ENCODE measurements at regions of chr16 and their contacts with region 1.

Region 1: DNA sequence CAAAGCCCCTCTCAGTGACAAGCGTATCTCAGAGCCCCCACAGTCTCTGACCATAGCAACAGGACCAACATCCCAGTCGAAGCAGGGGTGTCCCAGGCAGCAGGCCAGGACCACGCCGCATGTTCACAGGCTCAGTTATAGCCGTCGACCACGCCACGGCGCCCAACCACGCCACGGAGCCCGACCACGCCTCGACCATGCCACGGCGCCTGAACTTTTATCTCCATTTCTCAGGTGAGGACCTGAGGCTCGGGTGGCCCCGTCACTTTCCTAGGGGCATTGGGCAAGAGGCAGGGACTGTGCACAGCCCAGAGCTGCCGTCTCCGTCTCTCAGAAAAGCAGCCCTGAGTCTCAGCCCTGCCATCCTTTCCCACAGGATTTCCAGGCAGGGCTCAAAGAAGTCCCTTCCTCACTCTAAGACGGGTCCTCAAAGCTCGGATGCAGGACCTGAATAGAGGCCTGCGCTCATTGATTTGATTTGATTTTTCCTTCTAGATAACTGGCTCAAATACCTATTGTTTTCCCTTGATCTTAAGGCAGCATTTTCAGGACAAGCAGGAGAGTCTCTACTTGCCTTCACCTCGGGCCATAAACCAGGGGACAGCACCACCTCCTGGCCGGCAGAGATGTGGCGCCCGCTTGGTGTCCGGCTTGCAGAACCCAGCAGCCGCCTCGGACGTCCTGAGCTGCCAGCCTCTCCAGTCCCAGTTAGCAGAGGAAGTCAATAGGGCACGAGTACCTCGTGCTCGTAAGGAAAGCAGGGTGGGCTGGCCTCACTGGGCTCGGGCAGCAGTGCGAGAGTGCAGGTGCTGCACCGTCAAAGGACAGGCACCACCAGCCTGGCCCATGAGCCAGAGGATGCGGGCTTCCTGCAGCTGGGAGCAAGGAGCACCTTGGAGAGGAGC is 38.7 kb downstream of the C16orf95 start:
- DNase-seq: peak; percentile 49
- H3K4me3 Mint-ChIP-seq: no peak overlapping the region
- H3K27ac Mint-ChIP-seq: no peak overlapping the region
- H3K4me1 Mint-ChIP-seq: peaks cover 15% of the 10 kb centered on the region
- H3K27me3 Mint-ChIP-seq: no peaks in the 10 kb centered on the region

Region 2: DNA sequence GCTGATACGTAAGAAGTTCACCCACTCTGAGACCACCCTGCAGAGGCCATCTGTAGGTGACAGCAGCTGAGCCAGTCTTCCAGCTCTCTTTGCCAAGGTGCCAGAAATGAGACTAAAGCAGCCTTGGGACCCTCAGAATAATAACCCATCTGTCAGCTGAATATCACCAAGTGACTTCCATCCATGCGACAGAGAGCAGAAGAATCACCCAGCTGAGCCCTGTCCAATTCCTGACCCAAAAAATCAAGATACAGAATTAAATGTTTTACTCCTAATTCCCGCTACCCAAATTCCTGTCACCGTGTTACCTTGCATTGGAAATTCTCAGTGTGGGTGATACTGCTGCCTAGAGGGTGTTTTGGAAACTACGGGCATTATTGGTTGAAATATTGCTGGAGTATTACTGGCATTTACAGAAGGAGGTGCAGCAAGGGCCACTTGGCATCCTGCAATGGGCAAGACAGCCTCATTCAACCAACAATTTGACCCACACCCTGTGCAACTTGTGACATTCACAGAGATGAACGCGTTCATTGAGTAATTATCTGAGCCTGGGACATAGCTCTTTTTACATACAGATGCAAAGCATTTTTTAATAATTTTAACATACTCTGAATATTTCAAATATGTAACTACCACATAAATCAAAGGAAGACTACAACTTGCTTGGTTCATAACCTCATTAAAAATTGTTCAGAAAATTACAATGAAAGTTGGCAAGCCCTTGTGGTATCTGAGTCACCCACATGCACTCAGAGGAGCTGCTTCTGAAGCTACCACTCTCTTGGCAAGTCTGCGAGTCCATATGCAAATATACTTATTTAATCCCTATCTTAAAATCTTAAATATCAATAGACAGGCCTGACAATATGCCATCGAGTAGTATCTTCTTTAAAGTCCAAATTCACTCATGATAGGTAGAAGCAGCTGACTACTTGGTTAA is 87.9 kb before region 1 on chr16:
- intact Hi-C with region 1: no loop called
- DNase-seq: no peak
- H3K4me3 Mint-ChIP-seq: no peak overlapping the region
- H3K27ac Mint-ChIP-seq: no peak overlapping the region
- H3K4me1 Mint-ChIP-seq: no peaks in the 10 kb centered on the region
- H3K27me3 Mint-ChIP-seq: no peaks in the 10 kb centered on the region

Region 3: DNA sequence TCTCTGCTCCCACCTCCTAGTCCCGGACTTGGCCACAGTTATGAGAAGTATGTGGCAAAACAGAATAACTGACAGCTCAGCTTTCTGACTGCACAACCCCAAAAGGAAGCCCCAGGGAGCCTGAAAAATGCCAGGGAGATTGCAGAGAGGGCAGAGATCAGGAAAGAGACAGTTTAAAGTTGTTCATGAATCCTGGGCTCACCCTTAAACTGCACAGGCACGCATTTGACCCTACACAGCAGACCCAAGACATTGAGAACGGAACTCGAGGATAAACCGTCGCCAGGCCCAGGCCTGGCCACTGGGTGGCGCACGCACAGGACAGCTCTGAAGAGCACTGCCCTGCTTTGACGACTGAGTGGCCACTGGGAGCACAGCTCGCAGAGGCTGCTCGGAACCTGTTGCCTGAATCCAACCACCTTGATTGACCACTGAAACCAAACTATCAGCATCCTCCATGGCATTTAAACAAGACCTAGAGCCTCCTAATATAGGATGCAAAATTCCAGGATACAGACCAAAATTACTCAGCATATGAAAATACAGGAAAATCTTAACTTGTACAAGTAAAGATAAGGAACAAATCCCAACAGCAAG is 75.3 kb before region 1 on chr16:
- intact Hi-C with region 1: loop called (anchors 1 kb)
- DNase-seq: peak; percentile 47
- H3K4me3 Mint-ChIP-seq: no peak overlapping the region
- H3K27ac Mint-ChIP-seq: no peak overlapping the region
- H3K4me1 Mint-ChIP-seq: peaks cover 3% of the 10 kb centered on the region
- H3K27me3 Mint-ChIP-seq: peaks cover 6% of the 10 kb centered on the region

Region 4: DNA sequence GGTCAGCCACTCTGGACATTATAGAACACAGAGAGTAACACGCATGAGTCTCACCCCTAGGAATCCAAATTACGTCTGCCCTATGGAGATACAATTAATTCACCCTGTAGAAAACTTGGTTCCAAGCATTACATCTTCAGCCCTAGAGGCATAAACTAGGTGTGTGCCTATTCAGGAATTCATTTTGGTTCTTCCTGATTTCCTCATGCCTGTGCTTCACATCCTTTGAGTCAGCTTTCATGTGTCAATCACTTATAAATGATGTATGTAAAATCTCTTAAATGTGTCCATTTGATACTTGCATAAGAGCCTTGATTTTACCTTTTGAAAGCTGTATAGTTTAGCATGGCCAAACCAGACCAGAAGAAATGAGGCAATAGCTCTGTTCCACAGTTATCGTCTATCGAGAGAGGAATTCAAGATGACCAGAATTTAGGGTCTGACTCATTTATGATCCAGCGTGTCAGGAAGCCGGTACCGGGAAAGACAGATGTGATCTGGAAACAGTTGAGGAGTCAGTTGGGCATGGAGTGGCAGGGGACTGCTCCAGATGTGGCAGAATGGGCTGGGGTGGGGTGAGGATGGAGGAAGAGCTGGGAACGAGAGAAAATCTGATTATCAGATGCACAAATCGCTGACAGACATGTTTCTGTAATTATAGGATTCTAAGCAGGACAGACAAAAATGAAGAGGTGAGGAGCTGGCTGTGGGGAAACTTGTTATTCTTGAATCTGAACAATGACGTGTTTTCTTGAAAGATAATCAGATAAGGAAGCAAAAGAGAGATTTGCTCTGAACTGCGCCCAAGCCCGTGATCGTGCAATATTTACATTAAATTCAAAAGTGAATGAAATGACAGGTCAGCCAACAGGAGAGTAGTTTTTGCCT is 38.0 kb before region 1 on chr16:
- intact Hi-C with region 1: loop called (anchors 5 kb)
- DNase-seq: no peak
- H3K4me3 Mint-ChIP-seq: no peak overlapping the region
- H3K27ac Mint-ChIP-seq: peak overlapping the region; percentile 65
- H3K4me1 Mint-ChIP-seq: peaks cover 57% of the 10 kb centered on the region
- H3K27me3 Mint-ChIP-seq: no peaks in the 10 kb centered on the region

Region 5: DNA sequence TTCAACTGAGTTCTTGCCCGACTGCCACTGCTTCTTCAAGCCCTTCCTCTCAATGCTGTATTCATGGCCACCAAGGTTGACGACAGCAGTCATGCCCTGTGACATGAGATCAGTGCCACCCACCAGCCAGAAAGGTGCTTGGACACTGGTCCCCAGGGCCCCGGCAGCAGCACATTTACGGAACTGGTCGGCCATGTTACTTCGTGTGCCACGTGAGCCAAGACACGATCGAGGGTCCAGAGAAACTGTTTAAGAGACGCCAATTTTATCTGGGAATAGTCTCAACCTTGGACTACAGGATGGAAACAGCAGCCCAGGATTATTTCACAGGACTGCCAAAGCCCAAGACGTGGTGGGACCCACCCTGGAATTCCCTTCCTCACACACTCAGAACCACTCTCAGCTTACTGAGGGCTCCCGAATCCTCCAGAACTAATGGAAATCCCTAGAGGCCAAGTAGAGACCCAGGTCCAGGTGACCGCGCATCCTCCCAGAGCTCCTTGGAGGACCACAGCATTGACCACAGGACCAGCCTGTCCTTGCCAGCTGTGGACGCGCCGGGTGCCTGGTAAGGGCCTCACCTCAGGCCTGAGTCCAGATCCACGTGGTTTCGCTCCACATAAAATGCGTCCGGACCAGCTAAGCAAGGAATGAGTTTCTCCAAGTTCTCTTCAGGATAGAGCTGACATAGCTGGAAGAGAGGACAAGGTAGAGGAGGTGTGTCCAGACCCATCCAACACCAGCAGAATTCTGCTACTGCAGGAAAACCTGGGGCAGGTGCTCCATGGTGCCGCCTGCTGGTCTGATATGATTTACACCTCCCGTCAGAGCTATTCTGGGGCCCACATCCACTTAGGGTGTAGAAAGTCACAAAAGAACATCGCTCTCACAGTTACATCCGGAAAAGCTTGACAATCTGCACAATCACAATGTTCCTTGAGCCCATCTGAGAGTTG is 141.9 kb after region 1 on chr16:
- intact Hi-C with region 1: no loop called
- DNase-seq: no peak
- H3K4me3 Mint-ChIP-seq: no peak overlapping the region
- H3K27ac Mint-ChIP-seq: no peak overlapping the region
- H3K4me1 Mint-ChIP-seq: no peaks in the 10 kb centered on the region
- H3K27me3 Mint-ChIP-seq: no peaks in the 10 kb centered on the region

Region 6: DNA sequence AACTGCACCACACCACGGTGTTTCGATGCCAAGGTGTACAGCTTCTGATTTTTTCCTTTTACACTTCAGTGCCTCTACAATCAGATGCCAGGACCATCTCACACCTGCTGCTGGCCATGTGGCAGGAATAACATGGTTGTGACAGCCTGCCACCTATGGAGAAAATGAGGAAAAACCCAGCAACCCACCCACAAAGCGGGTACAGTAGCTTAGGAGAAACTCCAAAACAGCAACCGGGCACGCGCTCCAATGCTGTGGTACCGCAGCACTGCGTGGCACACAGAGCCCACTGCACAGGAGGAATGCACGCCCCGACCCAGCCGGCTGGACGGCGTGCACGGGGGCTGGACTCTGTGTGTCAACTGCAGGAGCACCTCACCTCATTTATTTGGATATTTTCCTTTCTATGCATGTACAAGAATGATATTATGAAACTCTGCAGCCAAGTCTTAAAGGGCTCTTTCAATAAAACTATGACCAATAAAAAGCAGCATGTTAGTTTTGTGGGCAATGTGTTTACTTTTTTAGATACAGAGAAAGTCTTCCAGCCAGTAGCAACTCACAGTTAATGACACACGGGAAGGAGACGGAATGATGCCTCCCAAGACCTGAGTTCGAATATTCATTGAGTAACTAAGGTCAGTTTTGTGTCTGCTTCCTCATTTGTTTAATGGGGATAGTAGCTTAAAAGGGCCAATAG is 159.6 kb after region 1 on chr16:
- intact Hi-C with region 1: no loop called
- DNase-seq: no peak
- H3K4me3 Mint-ChIP-seq: no peak overlapping the region
- H3K27ac Mint-ChIP-seq: no peak overlapping the region
- H3K4me1 Mint-ChIP-seq: peaks cover 15% of the 10 kb centered on the region
- H3K27me3 Mint-ChIP-seq: peaks cover 7% of the 10 kb centered on the region